Gastrocnemius medialis (tissue), 4 donors: ENCODE measurements at regions of chr20 and their contacts with region 1.

Region 1: DNA sequence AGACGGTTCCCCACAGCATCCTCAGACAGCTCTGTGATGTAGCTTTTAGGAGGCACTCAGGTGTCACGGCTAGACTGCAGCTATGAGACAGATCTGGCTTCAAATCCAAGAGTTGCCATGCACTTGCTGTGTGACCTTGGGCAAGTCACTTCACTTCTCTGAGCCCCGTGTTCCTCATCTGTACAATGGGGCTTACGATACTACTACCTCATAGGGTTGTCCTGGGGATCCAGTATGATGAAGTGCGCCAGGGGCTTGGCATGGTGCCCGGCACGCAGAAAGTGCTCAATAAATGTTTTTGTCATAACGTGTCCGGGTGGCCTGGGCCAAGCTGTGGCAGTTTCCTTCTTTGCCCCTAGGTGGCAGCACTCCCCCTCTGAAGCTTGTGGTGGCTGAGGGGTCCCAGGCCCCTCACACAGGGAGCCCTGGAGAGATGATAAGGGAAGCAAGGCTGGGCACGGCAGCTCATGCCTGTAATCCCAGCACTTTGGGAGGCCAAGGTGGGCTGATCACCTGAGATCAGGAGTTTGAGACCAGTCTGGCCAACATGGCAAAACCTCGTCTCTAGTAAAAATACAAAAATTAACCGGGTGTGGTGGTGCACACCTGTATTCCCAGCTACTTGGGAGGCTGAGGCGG is 19.1 kb upstream of the CHMP4B start:
- DNase-seq: peak in 1 of 2 donors; percentile 28
- ATAC-seq: no peak
- H3K4me3 ChIP-seq: no peak overlapping the region
- H3K27ac ChIP-seq: peak overlapping the region in 2 of 4 donors; percentile 37 to 59
- H3K4me1 ChIP-seq: peaks cover 13 to 29% of the 10 kb centered on the region in 2 donors
- H3K27me3 ChIP-seq: no peaks in the 10 kb centered on the region
- CTCF ChIP-seq: peak; percentile 42 to 84 (median 72)
- POLR2A ChIP-seq: no peak

Region 2: GRCh38 chr20:33862709-33863403 is 70.8 kb after region 1 on chr20:
- in situ Hi-C with region 1: no loop called
- intact Hi-C with region 1: loop called (anchors 5 kb)
- DNase-seq: peak in 1 of 2 donors; percentile 15
- ATAC-seq: peak in 1 of 2 donors; percentile 36
- H3K4me3 ChIP-seq: no peak overlapping the region
- H3K27ac ChIP-seq: no peak overlapping the region
- H3K4me1 ChIP-seq: peaks cover 6 to 10% of the 10 kb centered on the region in 2 donors
- H3K27me3 ChIP-seq: no peaks in the 10 kb centered on the region
- CTCF ChIP-seq: peak; percentile 40 to 75 (median 55)
- POLR2A ChIP-seq: no peak

Region 3: DNA sequence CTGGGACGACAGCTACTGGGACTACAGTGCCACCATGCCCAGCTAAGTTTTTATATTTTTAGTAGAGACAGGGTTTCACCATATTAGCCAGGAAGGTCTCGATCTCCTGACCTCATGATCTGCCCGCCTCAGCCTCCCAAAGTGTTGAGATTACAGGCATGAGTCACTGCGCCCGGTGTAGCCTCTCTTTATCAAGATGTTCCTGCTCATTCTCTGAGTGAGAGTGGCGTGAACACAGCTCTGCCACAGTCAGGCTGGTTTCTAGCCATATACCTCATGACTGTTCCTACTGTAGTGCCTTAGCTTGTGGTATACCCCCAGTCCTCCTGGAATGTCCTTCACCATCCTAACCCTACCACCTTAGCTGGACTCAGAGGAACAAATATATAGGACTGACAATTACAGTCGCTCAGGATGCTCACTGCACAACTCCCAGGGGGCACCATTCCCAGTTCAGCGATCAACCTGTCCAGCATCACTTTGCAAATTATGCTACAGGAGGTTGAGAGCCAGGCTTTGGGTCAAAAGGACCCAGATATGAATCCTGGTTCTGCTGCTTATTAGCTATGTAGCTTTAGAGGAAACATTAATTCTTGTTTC is 105.3 kb after region 1 on chr20:
- in situ Hi-C with region 1: no loop called
- intact Hi-C with region 1: no loop called
- DNase-seq: no peak
- ATAC-seq: no peak
- H3K4me3 ChIP-seq: no peak overlapping the region
- H3K27ac ChIP-seq: no peak overlapping the region
- H3K4me1 ChIP-seq: no peaks in the 10 kb centered on the region
- H3K27me3 ChIP-seq: peaks cover 0 to 9% (median 3%) of the 10 kb centered on the region in 3 donors
- CTCF ChIP-seq: no peak
- POLR2A ChIP-seq: no peak

Region 4: GRCh38 chr20:33915726-33916331 is 123.8 kb after region 1 on chr20:
- in situ Hi-C with region 1: no loop called
- intact Hi-C with region 1: loop called (anchors 2 kb)
- DNase-seq: peak; percentile 4 to 40
- ATAC-seq: peak; percentile 56 to 68
- H3K4me3 ChIP-seq: no peak overlapping the region
- H3K27ac ChIP-seq: no peak overlapping the region
- H3K4me1 ChIP-seq: no peaks in the 10 kb centered on the region
- H3K27me3 ChIP-seq: no peaks in the 10 kb centered on the region
- CTCF ChIP-seq: peak; percentile 38 to 76 (median 65)
- POLR2A ChIP-seq: no peak